ENCODE measurements at regions of chr9 and their contacts with region 1.

Region 1: GRCh38 chr9:114487607-114488300 is 17.5 kb downstream of the WHRN start:
- DNase-seq: peak in 1 of 2 experiments; percentile 78
- H3K4me3 ChIP-seq: no peak overlapping the region
- H3K27ac ChIP-seq: no peak overlapping the region
- H3K4me1 ChIP-seq: peaks cover 0 to 3% (median 0%) of the 10 kb centered on the region in 4 experiments; a peak in 3 of 7 replicates
- H3K27me3 ChIP-seq: no peaks in the 10 kb centered on the region
- CTCF ChIP-seq: peak; percentile 70 to 86 (median 81)
- EP300 ChIP-seq: no peak
- POLR2A ChIP-seq: no peak
- RAD21 ChIP-seq: peak; percentile 83 to 86

Region 2: GRCh38 chr9:114472765-114473446 is 14.8 kb before region 1 on chr9:
- CTCF ChIA-PET with region 1: interaction called, 55 read pairs
- POLR2A ChIA-PET with region 1: interaction called, 10 read pairs
- DNase-seq: no peak
- H3K4me3 ChIP-seq: no peak overlapping the region
- H3K27ac ChIP-seq: no peak overlapping the region
- H3K4me1 ChIP-seq: peaks cover 0 to 2% (median 0%) of the 10 kb centered on the region in 4 experiments; a peak in 1 of 7 replicates
- H3K27me3 ChIP-seq: no peaks in the 10 kb centered on the region
- CTCF ChIP-seq: no peak
- EP300 ChIP-seq: no peak
- POLR2A ChIP-seq: no peak
- RAD21 ChIP-seq: no peak

Region 3: GRCh38 chr9:114499528-114499927 is 11.8 kb after region 1 on chr9:
- CTCF ChIA-PET with region 1: interaction called, 33 read pairs
- POLR2A ChIA-PET with region 1: interaction called, 5 read pairs
- DNase-seq: no peak
- H3K4me3 ChIP-seq: no peak overlapping the region
- H3K27ac ChIP-seq: no peak overlapping the region
- H3K4me1 ChIP-seq: peaks cover 5 to 17% (median 11%) of the 10 kb centered on the region in 4 experiments; a peak in 6 of 7 replicates
- H3K27me3 ChIP-seq: peaks cover 0 to 6% (median 6%) of the 10 kb centered on the region in 4 experiments; a peak in 5 of 7 replicates
- CTCF ChIP-seq: no peak
- EP300 ChIP-seq: no peak
- POLR2A ChIP-seq: no peak
- RAD21 ChIP-seq: no peak

Region 4: GRCh38 chr9:114786251-114786650 is 298.5 kb after region 1 on chr9:
- CTCF ChIA-PET with region 1: no interaction called
- POLR2A ChIA-PET with region 1: no interaction called
- DNase-seq: no peak
- H3K4me3 ChIP-seq: no peak overlapping the region
- H3K27ac ChIP-seq: no peak overlapping the region
- H3K4me1 ChIP-seq: no peaks in the 10 kb centered on the region
- H3K27me3 ChIP-seq: no peaks in the 10 kb centered on the region
- CTCF ChIP-seq: no peak
- EP300 ChIP-seq: no peak
- POLR2A ChIP-seq: no peak
- RAD21 ChIP-seq: no peak